Endothelial cell of umbilical vein (primary cell): ENCODE measurements at regions of chr6 and their contacts with region 1.

Region 1: GRCh38 chr6:138287144-138287955 is 69.1 kb upstream of the PBOV1 start:
- DNase-seq: peak; percentile 29
- H3K4me3 ChIP-seq: no peak overlapping the region
- H3K27ac ChIP-seq: no peak overlapping the region
- H3K4me1 ChIP-seq: peaks cover 3% of the 10 kb centered on the region
- H3K27me3 ChIP-seq: no peaks in the 10 kb centered on the region
- CTCF ChIP-seq: peak; percentile 43 to 67
- POLR2A ChIP-seq: no peak

Region 2: GRCh38 chr6:138297761-138298298 is 10.5 kb after region 1 on chr6:
- CTCF ChIA-PET with region 1: interaction called, 14 read pairs
- POLR2A ChIA-PET with region 1: no interaction called
- dilution Hi-C with region 1: no loop called
- intact Hi-C with region 1: no loop called
- DNase-seq: no peak
- H3K4me3 ChIP-seq: no peak overlapping the region
- H3K27ac ChIP-seq: no peak overlapping the region
- H3K4me1 ChIP-seq: peaks cover 2% of the 10 kb centered on the region
- H3K27me3 ChIP-seq: no peaks in the 10 kb centered on the region
- CTCF ChIP-seq: no peak
- POLR2A ChIP-seq: no peak